Activated T-helper 1 cell treated with anti-CD3 and anti-CD28 coated beads, Interleukin-12 subunit alpha, Interleukin-12 subunit beta, Interleukin-2, Interleukin-4 antibody, amounts not matched to agents 30 ng/mL and 10 ng/mL and 1 ng/mL, durations not matched to agents 14 hours and 24 hours and 36 hours (primary cell): ENCODE measurements at regions of chr1 and their contacts with region 1.

Region 1: GRCh38 chr1:220879076-220879508 is at the start of gene HLX:
- DNase-seq: peak; percentile 24
- H3K4me3 Mint-ChIP-seq: peak within 1 kb of the TSS; percentile 84
- H3K27ac Mint-ChIP-seq: peak within 1 kb of the TSS; percentile 84
- H3K4me1 Mint-ChIP-seq: peaks cover 36% of the 10 kb centered on the region
- H3K27me3 Mint-ChIP-seq: peaks cover 70% of the 10 kb centered on the region
- total RNA-seq, gene HLX: 5.1 and 6.3 TPM in 2 replicates

Region 2: DNA sequence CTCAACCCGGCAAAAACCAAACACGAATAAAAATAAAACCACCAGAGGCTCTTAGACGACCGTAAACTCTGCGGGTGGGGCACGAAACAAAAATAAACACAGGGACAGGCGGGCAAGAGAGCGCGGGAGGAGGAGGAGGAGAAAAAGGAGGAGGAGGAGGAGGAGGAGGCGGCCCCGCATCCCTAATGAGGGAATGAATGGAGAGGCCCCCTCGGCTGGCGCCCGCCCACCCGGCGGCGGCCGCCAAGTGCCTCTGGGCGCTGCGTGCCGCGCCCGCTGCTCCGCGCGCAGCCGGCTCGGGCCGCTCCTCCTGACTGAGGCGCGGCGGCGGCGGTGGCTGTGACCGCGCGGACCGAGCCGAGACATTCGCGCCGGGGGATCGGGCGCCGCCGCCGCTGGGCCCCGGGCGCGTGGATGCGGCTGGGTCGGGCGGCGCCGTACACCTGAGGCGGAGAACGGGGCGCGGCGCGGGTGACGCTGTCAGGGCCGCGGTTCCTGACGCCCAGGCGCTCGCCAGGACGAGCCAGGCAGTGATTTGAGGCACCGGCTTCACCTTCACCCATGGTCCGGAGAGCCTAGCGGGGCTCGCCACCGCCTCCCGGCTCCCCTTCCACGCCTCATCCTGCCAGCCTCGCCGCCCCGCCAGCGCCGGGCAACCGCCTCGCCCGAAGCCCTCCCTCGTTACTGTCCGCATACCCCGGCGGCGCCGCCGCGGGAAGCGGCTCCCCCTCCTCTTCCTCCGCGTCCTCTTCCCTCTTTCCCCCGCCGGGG is 351.0 kb before region 1 on chr1 and contains the start of gene MARK1:
- intact Hi-C with region 1: loop called (anchors 5 kb)
- DNase-seq: no peak
- H3K4me3 Mint-ChIP-seq: peak within 1 kb of the TSS; percentile 81
- H3K27ac Mint-ChIP-seq: peak within 1 kb of the TSS; percentile 32
- H3K4me1 Mint-ChIP-seq: peaks cover 12% of the 10 kb centered on the region
- H3K27me3 Mint-ChIP-seq: peaks cover 58% of the 10 kb centered on the region
- total RNA-seq, gene MARK1: not detected in 2 replicates

Region 3: GRCh38 chr1:220700556-220701179 is 178.4 kb before region 1 on chr1:
- intact Hi-C with region 1: no loop called
- DNase-seq: no peak
- H3K4me3 Mint-ChIP-seq: no peak overlapping the region
- H3K27ac Mint-ChIP-seq: no peak overlapping the region
- H3K4me1 Mint-ChIP-seq: no peaks in the 10 kb centered on the region
- H3K27me3 Mint-ChIP-seq: peaks cover 6% of the 10 kb centered on the region

Region 4: DNA sequence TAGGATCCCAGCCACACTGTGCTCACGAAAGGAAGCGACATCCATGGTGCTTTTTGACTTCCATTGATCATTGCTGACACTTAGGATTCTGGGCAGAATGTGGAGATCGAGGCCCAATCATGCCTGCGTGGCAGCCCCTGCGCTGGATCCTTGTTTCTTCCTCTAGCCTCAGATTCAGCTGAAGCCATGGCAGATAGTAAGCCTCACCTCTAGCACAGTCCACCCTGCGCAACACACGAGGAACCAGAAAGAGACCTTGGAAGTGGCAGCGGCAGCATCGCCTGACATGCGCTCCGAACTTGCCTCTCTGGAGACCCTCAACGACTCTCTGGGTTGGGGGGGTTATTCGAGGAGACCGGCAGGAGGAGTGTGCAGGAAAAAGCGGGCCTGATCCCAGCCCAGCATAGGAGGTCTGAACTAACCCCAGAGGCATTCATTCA is 10.8 kb after region 1 on chr1:
- intact Hi-C with region 1: loop called (anchors 1 kb)
- DNase-seq: no peak
- H3K4me3 Mint-ChIP-seq: no peak overlapping the region
- H3K27ac Mint-ChIP-seq: no peak overlapping the region
- H3K4me1 Mint-ChIP-seq: peaks cover 12% of the 10 kb centered on the region
- H3K27me3 Mint-ChIP-seq: peaks cover 66% of the 10 kb centered on the region

Region 5: DNA sequence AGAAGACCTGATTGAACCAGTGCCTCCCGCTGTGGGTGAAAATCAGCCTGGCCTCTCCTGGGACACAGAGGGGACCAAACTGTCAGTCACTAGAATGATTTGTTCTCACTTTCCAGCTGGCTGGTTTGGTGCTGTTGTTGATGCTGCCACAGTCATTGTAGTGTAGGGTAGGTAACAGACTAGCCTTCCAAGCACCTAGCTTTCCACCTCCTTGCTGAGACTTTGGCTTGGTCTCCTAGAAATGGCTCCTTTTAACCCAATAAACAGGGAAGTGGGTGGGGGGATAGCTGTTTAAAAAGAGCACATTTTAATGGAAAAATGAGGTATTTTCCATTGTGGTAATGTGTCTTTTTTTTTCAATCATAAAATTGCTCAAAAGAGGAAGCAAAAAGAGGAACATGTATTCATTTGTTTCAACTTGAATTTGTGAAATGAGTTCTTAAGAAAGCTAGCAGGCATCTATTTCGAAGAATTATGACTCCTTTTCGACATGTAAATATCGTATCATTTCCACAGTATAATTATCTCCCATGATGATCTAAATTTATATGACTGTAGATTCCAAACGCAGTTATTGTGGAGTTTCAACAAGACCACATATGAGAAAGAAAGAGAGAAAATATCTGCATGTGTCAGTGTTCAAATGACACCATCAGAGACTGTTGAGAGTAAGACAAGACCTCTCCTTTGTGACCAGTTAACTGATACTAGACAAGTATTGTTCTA is 190.2 kb after region 1 on chr1:
- intact Hi-C with region 1: loop called (anchors 10 kb)
- DNase-seq: no peak
- H3K4me3 Mint-ChIP-seq: no peak overlapping the region
- H3K27ac Mint-ChIP-seq: peak overlapping the region; percentile 77
- H3K4me1 Mint-ChIP-seq: peaks cover 12% of the 10 kb centered on the region
- H3K27me3 Mint-ChIP-seq: no peaks in the 10 kb centered on the region